ENCODE measurements at regions of chr6 and their contacts with region 1.

Region 1: GRCh38 chr6:97059473-97059872 is 134.9 kb downstream of the KLHL32 start:
- DNase-seq: peak in 5 of 9 donors; percentile 25 to 41 (median 29)
- ATAC-seq: peak; percentile 45
- H3K4me3 ChIP-seq: no peak overlapping the region
- H3K4me3 Mint-ChIP-seq: no peak overlapping the region
- H3K27ac ChIP-seq: no peak overlapping the region
- H3K27ac Mint-ChIP-seq: no peak overlapping the region
- H3K4me1 ChIP-seq: no peaks in the 10 kb centered on the region
- H3K4me1 Mint-ChIP-seq: peaks cover 0 to 4% (median 0%) of the 10 kb centered on the region in 7 donors
- H3K27me3 ChIP-seq: no peaks in the 10 kb centered on the region
- H3K27me3 Mint-ChIP-seq: peaks cover 0 to 3% (median 0%) of the 10 kb centered on the region in 5 donors

Region 2: DNA sequence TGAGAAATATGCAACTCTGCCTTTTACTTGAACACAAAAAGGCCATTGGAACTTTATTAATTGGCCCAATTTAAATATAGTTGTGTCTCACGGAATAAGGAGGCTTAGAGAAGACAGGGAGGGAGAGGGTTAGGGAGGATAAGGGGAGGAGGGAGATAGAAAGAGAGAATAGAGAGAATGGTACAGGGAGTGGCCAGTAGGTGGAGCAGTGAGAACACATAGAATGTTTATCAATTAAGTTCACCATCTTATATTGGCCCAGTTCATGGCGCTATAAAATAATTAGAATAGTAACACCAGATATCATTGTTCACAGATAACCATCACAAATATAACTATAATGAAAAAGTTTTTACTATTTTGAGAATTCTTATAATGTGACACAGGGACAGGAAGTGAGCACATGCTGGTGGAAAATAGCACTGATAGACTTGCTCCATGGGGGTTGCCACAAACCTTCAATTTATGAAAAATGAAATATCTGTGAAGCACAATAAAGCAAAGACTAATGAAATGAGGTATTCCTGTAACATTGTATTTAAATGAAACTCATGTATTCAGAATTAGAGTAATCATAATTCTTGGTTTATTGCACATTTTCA is 1856.2 kb before region 1 on chr6:
- CTCF ChIA-PET with region 1: no interaction called
- POLR2A ChIA-PET with region 1: no interaction called
- intact Hi-C with region 1: loop called in 1 of 2 experiments (anchors 5 kb)
- DNase-seq: peak in 1 of 9 donors; percentile 4
- ATAC-seq: peak; percentile 50
- H3K4me3 ChIP-seq: no peak overlapping the region
- H3K4me3 Mint-ChIP-seq: no peak overlapping the region
- H3K27ac ChIP-seq: no peak overlapping the region
- H3K27ac Mint-ChIP-seq: no peak overlapping the region
- H3K4me1 ChIP-seq: no peaks in the 10 kb centered on the region
- H3K4me1 Mint-ChIP-seq: no peaks in the 10 kb centered on the region
- H3K27me3 ChIP-seq: no peaks in the 10 kb centered on the region
- H3K27me3 Mint-ChIP-seq: no peaks in the 10 kb centered on the region

Region 3: DNA sequence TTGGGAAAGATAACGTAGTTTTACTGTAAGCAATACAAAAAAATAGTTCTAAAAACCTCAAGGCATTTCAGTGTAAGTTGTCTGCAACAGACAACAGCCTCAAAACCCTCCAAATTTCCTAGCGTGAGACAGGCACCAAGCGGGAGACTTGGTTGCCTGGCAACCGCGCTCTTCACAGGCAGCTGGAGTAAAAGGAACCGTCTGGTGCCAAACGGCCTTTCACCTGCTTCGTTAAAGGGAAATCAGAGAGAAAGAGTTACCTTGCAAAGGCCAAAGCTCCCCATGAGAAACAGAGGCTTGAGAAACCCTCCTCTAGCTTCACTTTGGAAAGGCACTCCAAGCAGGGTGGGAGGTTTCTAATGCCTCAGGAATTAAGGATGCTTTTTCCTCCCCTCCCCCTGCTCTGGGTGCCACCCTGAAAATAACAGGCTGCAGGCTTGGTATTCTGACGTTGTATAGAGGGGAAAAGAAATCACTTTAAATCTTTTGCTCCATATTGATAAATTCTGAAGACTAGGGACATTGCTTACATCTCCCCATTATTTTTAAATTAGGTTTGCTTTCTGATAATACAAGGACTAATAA is 667.6 kb before region 1 on chr6:
- CTCF ChIA-PET with region 1: no interaction called
- POLR2A ChIA-PET with region 1: no interaction called
- intact Hi-C with region 1: loop called in 1 of 2 experiments (anchors 5 kb)
- DNase-seq: no peak
- ATAC-seq: no peak
- H3K4me3 ChIP-seq: no peak overlapping the region
- H3K4me3 Mint-ChIP-seq: no peak overlapping the region
- H3K27ac ChIP-seq: no peak overlapping the region
- H3K27ac Mint-ChIP-seq: no peak overlapping the region
- H3K4me1 ChIP-seq: no peaks in the 10 kb centered on the region
- H3K4me1 Mint-ChIP-seq: peaks cover 0 to 6% (median 4%) of the 10 kb centered on the region in 7 donors
- H3K27me3 ChIP-seq: no peaks in the 10 kb centered on the region
- H3K27me3 Mint-ChIP-seq: peaks cover 3 to 20% (median 4%) of the 10 kb centered on the region in 5 donors

Region 4: DNA sequence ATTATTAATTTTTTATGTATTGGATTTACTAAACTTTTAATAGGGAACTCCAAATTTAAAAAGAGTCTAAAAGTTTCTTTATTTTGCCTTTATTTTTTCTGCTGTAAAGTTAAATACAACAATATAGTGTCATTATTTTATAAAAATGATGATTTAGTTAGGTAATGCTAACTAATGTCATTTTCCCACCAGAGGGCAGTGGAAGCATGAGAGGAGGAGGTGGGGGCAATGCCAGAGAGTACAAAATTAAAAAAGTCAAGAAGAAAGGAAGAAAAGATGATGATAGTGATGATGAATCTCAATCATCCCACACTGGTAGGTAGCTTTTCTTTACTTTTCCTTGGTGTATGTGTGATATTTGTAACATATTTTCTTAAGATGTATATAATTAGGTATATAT is 516.8 kb before region 1 on chr6:
- CTCF ChIA-PET with region 1: interaction called, 10 read pairs
- POLR2A ChIA-PET with region 1: no interaction called
- intact Hi-C with region 1: loop called (anchors 1 kb)
- DNase-seq: peak in 5 of 9 donors; percentile 6 to 31 (median 11)
- ATAC-seq: no peak
- H3K4me3 ChIP-seq: no peak overlapping the region
- H3K4me3 Mint-ChIP-seq: no peak overlapping the region
- H3K27ac ChIP-seq: no peak overlapping the region
- H3K27ac Mint-ChIP-seq: peak overlapping the region in 1 of 9 donors; percentile 20
- H3K4me1 ChIP-seq: no peaks in the 10 kb centered on the region
- H3K4me1 Mint-ChIP-seq: peaks cover 0 to 4% (median 0%) of the 10 kb centered on the region in 7 donors
- H3K27me3 ChIP-seq: no peaks in the 10 kb centered on the region
- H3K27me3 Mint-ChIP-seq: no peaks in the 10 kb centered on the region

Region 5: GRCh38 chr6:96626759-96627364 is 432.6 kb before region 1 on chr6:
- CTCF ChIA-PET with region 1: interaction called, 4 read pairs
- POLR2A ChIA-PET with region 1: no interaction called
- intact Hi-C with region 1: loop called (anchors 1 kb)
- DNase-seq: peak in 5 of 9 donors; percentile 7 to 33 (median 13)
- ATAC-seq: peak; percentile 46
- H3K4me3 ChIP-seq: no peak overlapping the region
- H3K4me3 Mint-ChIP-seq: no peak overlapping the region
- H3K27ac ChIP-seq: no peak overlapping the region
- H3K27ac Mint-ChIP-seq: no peak overlapping the region
- H3K4me1 ChIP-seq: no peaks in the 10 kb centered on the region
- H3K4me1 Mint-ChIP-seq: peaks cover 0 to 3% (median 0%) of the 10 kb centered on the region in 7 donors
- H3K27me3 ChIP-seq: no peaks in the 10 kb centered on the region
- H3K27me3 Mint-ChIP-seq: peaks cover 5 to 23% (median 14%) of the 10 kb centered on the region in 5 donors

Region 6: GRCh38 chr6:96923871-96924493 is 135.5 kb before region 1 on chr6:
- CTCF ChIA-PET with region 1: interaction called, 3 read pairs
- POLR2A ChIA-PET with region 1: no interaction called
- intact Hi-C with region 1: loop called (anchors 5 to 10 kb)
- DNase-seq: peak in 1 of 9 donors; percentile 5
- ATAC-seq: peak; percentile 3
- H3K4me3 ChIP-seq: peak overlapping the region; percentile 68
- H3K4me3 Mint-ChIP-seq: peak overlapping the region; percentile 91 to 99 (median 98)
- H3K27ac ChIP-seq: peak overlapping the region; percentile 87
- H3K27ac Mint-ChIP-seq: peak overlapping the region; percentile 91 to 100 (median 99)
- H3K4me1 ChIP-seq: peaks cover 13 to 16% of the 10 kb centered on the region in 2 donors
- H3K4me1 Mint-ChIP-seq: peaks cover 8 to 50% (median 33%) of the 10 kb centered on the region in 7 donors
- H3K27me3 ChIP-seq: no peaks in the 10 kb centered on the region
- H3K27me3 Mint-ChIP-seq: peaks cover 0 to 22% (median 4%) of the 10 kb centered on the region in 5 donors

Region 7: DNA sequence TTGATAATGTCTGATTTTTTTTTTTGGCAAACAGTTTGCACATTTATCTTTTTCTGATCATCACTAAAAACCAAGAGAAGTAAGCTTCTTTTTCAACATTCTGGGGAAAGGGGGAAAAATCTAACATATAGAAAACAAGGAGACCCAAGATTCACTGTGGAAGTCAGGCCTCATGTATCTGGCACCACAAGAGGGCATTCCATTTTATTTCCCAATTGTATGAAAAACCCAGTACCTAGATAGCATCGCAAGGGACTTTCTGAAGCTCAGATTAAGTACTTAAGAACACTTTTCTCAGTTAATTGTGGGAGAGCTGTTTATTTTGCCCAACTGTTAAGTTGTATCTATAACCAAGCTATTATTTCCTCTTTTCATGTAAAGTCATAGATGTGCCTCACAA is 17.9 kb after region 1 on chr6:
- CTCF ChIA-PET with region 1: no interaction called
- POLR2A ChIA-PET with region 1: no interaction called
- intact Hi-C with region 1: no loop called
- DNase-seq: no peak
- ATAC-seq: no peak
- H3K4me3 ChIP-seq: no peak overlapping the region
- H3K4me3 Mint-ChIP-seq: no peak overlapping the region
- H3K27ac ChIP-seq: no peak overlapping the region
- H3K27ac Mint-ChIP-seq: no peak overlapping the region
- H3K4me1 ChIP-seq: no peaks in the 10 kb centered on the region
- H3K4me1 Mint-ChIP-seq: peaks cover 4 to 14% (median 11%) of the 10 kb centered on the region in 7 donors
- H3K27me3 ChIP-seq: no peaks in the 10 kb centered on the region
- H3K27me3 Mint-ChIP-seq: no peaks in the 10 kb centered on the region

Region 8: GRCh38 chr6:97563529-97563928 is 504.1 kb after region 1 on chr6:
- CTCF ChIA-PET with region 1: no interaction called
- POLR2A ChIA-PET with region 1: no interaction called
- intact Hi-C with region 1: no loop called
- DNase-seq: no peak
- ATAC-seq: no peak
- H3K4me3 ChIP-seq: no peak overlapping the region
- H3K4me3 Mint-ChIP-seq: no peak overlapping the region
- H3K27ac ChIP-seq: no peak overlapping the region
- H3K27ac Mint-ChIP-seq: no peak overlapping the region
- H3K4me1 ChIP-seq: no peaks in the 10 kb centered on the region
- H3K4me1 Mint-ChIP-seq: no peaks in the 10 kb centered on the region
- H3K27me3 ChIP-seq: no peaks in the 10 kb centered on the region
- H3K27me3 Mint-ChIP-seq: peaks cover 0 to 4% (median 0%) of the 10 kb centered on the region in 5 donors